ENCODE measurements at regions of chr21 and their contacts with region 1.

Region 1: GRCh38 chr21:25881525-25882376 is 147.0 kb downstream of the GABPA start:
- DNase-seq: peak; percentile 41
- ATAC-seq: peak; percentile 86
- H3K4me3 ChIP-seq: no peak overlapping the region
- H3K27ac ChIP-seq: no peak overlapping the region
- H3K4me1 ChIP-seq: no peaks in the 10 kb centered on the region
- H3K27me3 ChIP-seq: no peaks in the 10 kb centered on the region
- CTCF ChIP-seq: peak; percentile 55 to 97 (median 92); a peak in 5 of 6 replicates
- POLR2A ChIP-seq: no peak
- RAD21 ChIP-seq: peak; percentile 69

Region 2: DNA sequence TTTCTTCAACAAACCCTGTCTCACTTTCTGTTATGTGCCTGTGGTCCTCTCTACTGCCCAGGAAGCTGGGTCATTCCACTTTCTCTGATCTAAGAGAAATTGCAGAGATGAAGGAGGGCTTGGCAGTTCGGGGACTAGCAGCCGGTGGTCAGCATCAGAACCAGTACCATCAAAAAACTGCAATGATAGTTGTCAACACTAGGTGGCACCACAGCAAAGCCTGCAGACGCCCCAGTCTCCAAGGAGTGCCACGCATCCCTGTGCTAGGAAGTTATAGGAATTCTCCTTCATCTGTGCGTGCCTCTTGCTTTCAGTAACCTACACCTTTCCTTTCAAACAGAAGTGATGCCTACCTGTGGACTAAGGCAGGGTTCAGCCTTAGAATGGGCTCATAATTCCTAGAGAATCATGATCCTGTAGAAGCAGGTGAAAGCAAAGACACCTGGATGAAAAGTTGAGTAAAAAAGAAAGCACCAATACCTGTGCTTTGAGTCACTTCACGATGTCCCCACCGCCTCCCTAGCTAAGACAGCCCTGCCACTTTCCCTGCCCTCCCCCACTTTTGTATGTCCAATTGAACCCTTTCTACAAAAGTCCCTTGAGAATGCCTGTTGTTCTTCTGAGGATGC is 834.2 kb after region 1 on chr21:
- CTCF ChIA-PET with region 1: no interaction called
- POLR2A ChIA-PET with region 1: no interaction called
- RAD21 ChIA-PET with region 1: no interaction called
- intact Hi-C with region 1: loop called (anchors 1 kb)
- DNase-seq: no peak
- ATAC-seq: peak; percentile 63
- H3K4me3 ChIP-seq: no peak overlapping the region
- H3K27ac ChIP-seq: no peak overlapping the region
- H3K4me1 ChIP-seq: no peaks in the 10 kb centered on the region
- H3K27me3 ChIP-seq: no peaks in the 10 kb centered on the region
- CTCF ChIP-seq: peak in 2 of 3 experiments; percentile 63 to 64; a peak in 4 of 6 replicates
- POLR2A ChIP-seq: no peak
- RAD21 ChIP-seq: 0 out of 2 replicates have a peak, but pooled peaks have one; percentile 16